ENCODE measurements at regions of chr11 and their contacts with region 1.

Region 1: GRCh38 chr11:85941380-85941973 is 86.3 kb downstream of the CCDC83 start:
- DNase-seq: no peak
- ATAC-seq: no peak
- H3K4me3 Mint-ChIP-seq: no peak overlapping the region
- H3K27ac Mint-ChIP-seq: no peak overlapping the region
- H3K4me1 Mint-ChIP-seq: no peaks in the 10 kb centered on the region
- H3K27me3 Mint-ChIP-seq: no peaks in the 10 kb centered on the region
- CTCF ChIP-seq: no peak

Region 2: DNA sequence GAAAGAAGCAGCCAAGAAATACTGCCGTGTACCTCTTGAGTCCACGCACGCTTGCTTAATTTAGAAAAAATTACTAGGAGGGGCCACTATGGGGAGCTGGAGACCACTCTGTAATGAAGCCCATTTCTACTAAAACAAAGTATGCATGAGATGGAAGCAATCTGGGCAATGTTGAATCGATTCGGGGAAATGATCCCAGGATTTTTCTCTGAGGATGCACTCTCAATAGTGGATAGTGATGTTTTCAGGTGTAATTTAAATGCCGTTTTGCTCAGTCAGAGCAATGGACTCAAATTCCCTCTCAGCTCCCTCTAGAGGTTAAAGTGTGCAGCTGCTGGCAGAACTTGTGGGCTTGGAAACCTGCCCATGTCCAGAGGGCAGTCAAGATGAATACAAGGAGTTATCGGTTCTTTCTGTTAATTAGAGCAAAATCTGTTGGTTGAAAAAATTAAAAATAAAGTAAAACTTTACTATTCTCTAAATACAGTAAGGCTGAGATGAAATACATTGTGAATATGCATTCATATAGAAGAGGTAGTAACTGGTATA is 666.8 kb after region 1 on chr11:
- CTCF ChIA-PET with region 1: no interaction called
- POLR2A ChIA-PET with region 1: no interaction called
- intact Hi-C with region 1: loop called (anchors 5 kb)
- DNase-seq: no peak
- ATAC-seq: peak; percentile 67
- H3K4me3 Mint-ChIP-seq: no peak overlapping the region
- H3K27ac Mint-ChIP-seq: no peak overlapping the region
- H3K4me1 Mint-ChIP-seq: no peaks in the 10 kb centered on the region
- H3K27me3 Mint-ChIP-seq: peaks cover 2% of the 10 kb centered on the region
- CTCF ChIP-seq: peak; percentile 94

Region 3: GRCh38 chr11:86818466-86819192 is 877.2 kb after region 1 on chr11:
- CTCF ChIA-PET with region 1: no interaction called
- POLR2A ChIA-PET with region 1: no interaction called
- intact Hi-C with region 1: loop called (anchors 5 kb)
- DNase-seq: no peak
- ATAC-seq: no peak
- H3K4me3 Mint-ChIP-seq: no peak overlapping the region
- H3K27ac Mint-ChIP-seq: no peak overlapping the region
- H3K4me1 Mint-ChIP-seq: no peaks in the 10 kb centered on the region
- H3K27me3 Mint-ChIP-seq: peaks cover 12% of the 10 kb centered on the region
- CTCF ChIP-seq: no peak

Measured in activated B cell treated with CpG ODN at 0.5 μM for 24 hours (primary cell).